Ascending aorta (tissue), 2 donors: ENCODE measurements at regions of chr15 and their contacts with region 1.

Region 1: GRCh38 chr15:67109141-67110034 is 44.0 kb downstream of the SMAD3 start:
- DNase-seq: peak; percentile 47 to 85
- H3K4me3 ChIP-seq: no peak overlapping the region
- H3K27ac ChIP-seq: peak overlapping the region; percentile 4 to 37
- H3K4me1 ChIP-seq: peaks cover 19 to 54% of the 10 kb centered on the region in 2 donors
- H3K27me3 ChIP-seq: no peaks in the 10 kb centered on the region
- CTCF ChIP-seq: no peak

Region 2: DNA sequence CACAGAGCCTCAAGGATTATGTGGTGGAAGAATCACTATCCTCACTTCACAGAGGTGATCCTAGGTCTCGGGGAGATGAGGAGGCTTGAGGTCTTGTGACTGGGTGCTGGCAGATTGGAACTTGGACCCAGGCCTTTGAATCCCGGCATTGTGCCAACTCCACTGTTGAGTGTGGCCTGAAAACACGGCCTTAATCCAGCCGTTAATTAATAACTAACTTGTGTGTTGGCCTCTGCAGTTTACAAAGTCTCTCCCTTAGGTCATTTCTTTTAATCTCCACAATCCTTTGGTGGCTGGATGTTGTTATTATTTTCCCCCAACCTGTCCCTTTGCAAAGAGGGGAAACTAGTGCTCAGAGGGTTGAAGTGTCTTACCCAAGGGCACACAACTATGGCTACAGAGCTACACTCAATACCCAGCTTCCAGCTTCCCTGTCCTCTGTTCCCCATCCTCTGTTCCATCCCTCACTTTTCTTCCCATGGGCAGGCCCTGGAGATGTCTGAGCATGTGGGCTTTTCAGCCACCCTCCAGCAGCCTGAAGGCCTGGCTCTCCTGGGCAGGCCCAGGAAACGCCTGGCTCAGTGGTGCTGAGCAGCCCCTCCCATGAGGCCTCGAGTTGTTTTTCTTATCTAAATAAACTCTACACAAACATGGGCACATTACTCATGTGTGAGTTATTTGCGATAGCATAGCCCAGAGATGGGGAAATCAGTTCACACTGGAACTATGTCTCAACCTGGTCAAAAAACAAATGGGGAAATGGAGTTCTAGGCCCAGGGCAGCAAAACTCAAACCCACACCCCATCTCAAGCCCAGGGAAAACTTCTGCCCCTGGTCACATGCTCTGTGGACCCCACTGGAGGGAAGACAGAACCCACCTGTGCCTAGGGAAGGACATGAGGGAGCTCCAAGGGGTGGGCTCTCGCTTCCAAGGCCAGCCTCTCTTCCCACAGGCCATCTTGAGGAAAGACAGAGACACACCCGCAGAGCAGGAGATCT is 60.8 kb before region 1 on chr15:
- intact Hi-C with region 1: loop called (anchors 2 kb)
- DNase-seq: peak; percentile 40 to 91
- H3K4me3 ChIP-seq: no peak overlapping the region
- H3K27ac ChIP-seq: peak overlapping the region; percentile 94 to 95
- H3K4me1 ChIP-seq: peaks cover 12 to 66% of the 10 kb centered on the region in 2 donors
- H3K27me3 ChIP-seq: no peaks in the 10 kb centered on the region
- CTCF ChIP-seq: no peak

Region 3: GRCh38 chr15:67080900-67081431 is 28.4 kb before region 1 on chr15:
- intact Hi-C with region 1: loop called (anchors 2 kb)
- DNase-seq: peak; percentile 39 to 83
- H3K4me3 ChIP-seq: peak overlapping the region in 1 of 2 donors; percentile 40
- H3K27ac ChIP-seq: peak overlapping the region; percentile 65 to 67
- H3K4me1 ChIP-seq: peaks cover 23 to 68% of the 10 kb centered on the region in 2 donors
- H3K27me3 ChIP-seq: no peaks in the 10 kb centered on the region
- CTCF ChIP-seq: no peak

Region 4: DNA sequence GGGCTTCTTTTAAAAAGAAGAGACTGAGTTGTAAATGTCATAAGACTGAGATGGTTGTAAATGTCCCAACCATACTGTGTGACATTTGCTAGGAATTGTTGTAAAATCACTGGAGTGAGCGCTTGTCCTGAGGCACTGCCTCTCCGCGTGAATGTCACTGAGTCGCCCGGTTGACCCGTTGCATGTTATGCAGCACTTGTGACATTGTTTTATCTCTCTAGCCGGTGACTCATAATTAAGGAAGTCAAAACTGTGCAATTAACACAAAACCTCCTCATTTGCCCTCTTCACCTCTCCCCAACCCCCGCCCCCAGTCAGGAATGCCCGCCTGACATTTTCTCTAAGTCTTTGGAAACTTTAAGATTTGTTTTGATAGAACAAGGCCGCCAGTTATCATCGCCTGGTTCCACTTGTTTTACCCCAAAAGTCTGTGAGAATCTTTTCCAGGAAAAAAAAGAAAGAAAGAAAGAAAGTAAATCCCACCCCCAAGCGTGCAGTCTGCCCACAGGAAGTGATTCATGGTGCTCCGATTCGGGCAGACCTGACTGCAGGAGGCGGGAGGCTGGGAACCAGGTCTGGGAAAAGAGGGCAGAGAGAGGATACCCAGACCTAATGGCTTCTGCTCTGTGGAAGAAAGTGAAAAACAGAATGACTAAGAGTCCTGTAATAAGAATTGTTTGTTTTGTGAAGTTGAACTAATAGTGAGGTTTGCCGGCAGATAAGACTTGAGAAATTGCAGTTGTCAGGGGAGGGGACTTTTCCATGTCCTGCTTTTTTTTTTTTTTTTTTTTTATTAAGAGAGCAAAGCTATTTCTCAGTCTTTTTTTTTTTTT is 40.9 kb after region 1 on chr15:
- intact Hi-C with region 1: loop called (anchors 2 kb)
- DNase-seq: peak; percentile 62 to 94
- H3K4me3 ChIP-seq: peak overlapping the region in 1 of 2 donors; percentile 22
- H3K27ac ChIP-seq: peak overlapping the region; percentile 86 to 89
- H3K4me1 ChIP-seq: peaks cover 18 to 49% of the 10 kb centered on the region in 2 donors
- H3K27me3 ChIP-seq: no peaks in the 10 kb centered on the region
- CTCF ChIP-seq: no peak

Region 5: GRCh38 chr15:67254238-67255175 is 145.1 kb after region 1 on chr15 and contains the starts of genes AAGAB and IQCH:
- intact Hi-C with region 1: loop called (anchors 1 kb)
- DNase-seq: peak; percentile 89 to 98
- H3K4me3 ChIP-seq: peak within 1 kb of the TSS; percentile 70 to 91
- H3K27ac ChIP-seq: peak within 1 kb of the TSS; percentile 81 to 96
- H3K4me1 ChIP-seq: peaks cover 5 to 6% of the 10 kb centered on the region in 2 donors
- H3K27me3 ChIP-seq: no peaks in the 10 kb centered on the region
- CTCF ChIP-seq: no peak
- total RNA-seq, gene AAGAB: 27.8 TPM
- total RNA-seq, gene IQCH: not detected